Gastrocnemius medialis (tissue), 4 donors: ENCODE measurements at regions of chrX and their contacts with region 1.

Region 1: GRCh38 chrX:86887341-86887740 is 630.3 kb upstream of the KLHL4 start:
- DNase-seq: no peak
- ATAC-seq: no peak
- H3K4me3 ChIP-seq: no peak overlapping the region
- H3K27ac ChIP-seq: no peak overlapping the region
- H3K4me1 ChIP-seq: no peaks in the 10 kb centered on the region
- H3K27me3 ChIP-seq: peaks cover 0 to 3% (median 0%) of the 10 kb centered on the region in 3 donors
- CTCF ChIP-seq: no peak
- POLR2A ChIP-seq: no peak

Region 2: DNA sequence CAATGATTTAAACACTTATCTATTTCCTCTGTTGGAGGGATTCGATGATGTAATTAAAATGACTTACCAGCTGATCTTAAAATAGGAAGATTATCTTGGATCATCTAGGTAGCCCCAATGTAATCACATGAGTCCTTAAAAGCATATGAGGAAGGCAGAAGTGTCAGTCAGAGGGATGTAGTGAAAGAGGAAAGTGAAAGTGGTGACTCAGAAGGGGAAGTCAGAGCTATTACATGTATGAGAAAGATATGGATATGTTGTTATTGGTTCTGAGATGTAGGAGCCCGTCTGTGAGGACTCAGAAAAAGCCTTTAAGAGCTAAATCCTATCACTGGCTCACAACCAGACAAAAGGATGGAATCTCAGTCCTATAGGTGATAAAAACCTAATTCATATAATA is 282.7 kb before region 1 on chrX:
- in situ Hi-C with region 1: no loop called
- intact Hi-C with region 1: loop called (anchors 5 kb)
- DNase-seq: no peak
- ATAC-seq: no peak
- H3K4me3 ChIP-seq: no peak overlapping the region
- H3K27ac ChIP-seq: no peak overlapping the region
- H3K4me1 ChIP-seq: no peaks in the 10 kb centered on the region
- H3K27me3 ChIP-seq: no peaks in the 10 kb centered on the region
- CTCF ChIP-seq: no peak
- POLR2A ChIP-seq: no peak

Region 3: DNA sequence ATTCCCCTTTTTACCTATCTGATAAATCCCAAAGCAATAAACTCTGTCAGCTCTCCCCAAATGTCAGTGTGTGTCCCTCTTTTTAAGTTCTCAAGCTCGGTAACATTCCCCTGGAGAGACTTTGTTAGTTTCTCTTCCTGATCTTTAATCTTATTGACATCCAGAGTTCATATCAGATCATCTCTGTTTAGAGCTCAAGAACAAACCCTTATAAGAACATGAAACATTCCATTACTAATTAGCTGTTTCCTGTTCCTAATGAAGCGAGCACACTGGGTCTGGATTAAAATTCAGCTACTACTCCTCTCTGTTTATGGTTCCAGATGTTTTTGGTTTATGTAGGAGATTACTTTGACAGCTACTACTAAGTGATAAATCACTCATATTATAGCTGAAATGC is 57.6 kb before region 1 on chrX:
- in situ Hi-C with region 1: no loop called
- intact Hi-C with region 1: no loop called
- DNase-seq: no peak
- ATAC-seq: no peak
- H3K4me3 ChIP-seq: no peak overlapping the region
- H3K27ac ChIP-seq: peak overlapping the region in 2 of 4 donors; percentile 31 to 37
- H3K4me1 ChIP-seq: no peaks in the 10 kb centered on the region
- H3K27me3 ChIP-seq: peaks cover 0 to 5% (median 0%) of the 10 kb centered on the region in 3 donors
- CTCF ChIP-seq: no peak
- POLR2A ChIP-seq: no peak

Region 4: GRCh38 chrX:86910602-86911311 is 23.4 kb after region 1 on chrX:
- in situ Hi-C with region 1: no loop called
- intact Hi-C with region 1: no loop called
- DNase-seq: no peak
- ATAC-seq: no peak
- H3K4me3 ChIP-seq: no peak overlapping the region
- H3K27ac ChIP-seq: no peak overlapping the region
- H3K4me1 ChIP-seq: no peaks in the 10 kb centered on the region
- H3K27me3 ChIP-seq: no peaks in the 10 kb centered on the region
- CTCF ChIP-seq: no peak
- POLR2A ChIP-seq: no peak